Natural killer cell (primary cell): ENCODE measurements at regions of chr7 and their contacts with region 1.

Region 1: DNA sequence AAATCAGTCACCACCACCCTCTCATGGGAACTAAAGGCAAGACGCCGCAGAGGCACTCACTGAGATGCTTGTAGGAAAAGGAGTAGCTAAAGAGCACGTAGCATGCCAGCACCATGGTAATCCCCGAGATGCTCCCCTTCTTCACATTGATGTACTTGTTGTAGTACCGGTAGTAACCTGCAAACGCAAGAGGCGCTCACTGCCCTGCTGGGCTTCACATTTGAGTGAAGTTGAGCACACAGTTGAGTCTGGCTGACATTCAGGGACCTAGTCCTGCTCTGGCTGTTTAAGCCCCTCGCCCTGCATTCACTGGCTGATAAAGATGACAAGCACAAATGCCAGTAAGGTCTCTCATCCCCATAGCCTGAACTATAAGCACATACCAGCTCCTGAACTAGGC is 6.9 kb downstream of the ATP5MF start:
- DNase-seq: peak in 1 of 2 donors; percentile 49
- ATAC-seq: peak in 2 of 3 donors; percentile 47 to 70
- H3K4me3 ChIP-seq: no peak overlapping the region
- H3K4me3 Mint-ChIP-seq: no peak overlapping the region
- H3K27ac ChIP-seq: no peak overlapping the region
- H3K27ac Mint-ChIP-seq: peak overlapping the region in 1 of 2 donors; percentile 29
- H3K4me1 ChIP-seq: no peaks in the 10 kb centered on the region
- H3K4me1 Mint-ChIP-seq: peaks cover 22 to 27% of the 10 kb centered on the region in 2 donors
- H3K27me3 ChIP-seq: no peaks in the 10 kb centered on the region
- H3K27me3 Mint-ChIP-seq: no peaks in the 10 kb centered on the region
- CTCF ChIP-seq: no peak

Region 2: DNA sequence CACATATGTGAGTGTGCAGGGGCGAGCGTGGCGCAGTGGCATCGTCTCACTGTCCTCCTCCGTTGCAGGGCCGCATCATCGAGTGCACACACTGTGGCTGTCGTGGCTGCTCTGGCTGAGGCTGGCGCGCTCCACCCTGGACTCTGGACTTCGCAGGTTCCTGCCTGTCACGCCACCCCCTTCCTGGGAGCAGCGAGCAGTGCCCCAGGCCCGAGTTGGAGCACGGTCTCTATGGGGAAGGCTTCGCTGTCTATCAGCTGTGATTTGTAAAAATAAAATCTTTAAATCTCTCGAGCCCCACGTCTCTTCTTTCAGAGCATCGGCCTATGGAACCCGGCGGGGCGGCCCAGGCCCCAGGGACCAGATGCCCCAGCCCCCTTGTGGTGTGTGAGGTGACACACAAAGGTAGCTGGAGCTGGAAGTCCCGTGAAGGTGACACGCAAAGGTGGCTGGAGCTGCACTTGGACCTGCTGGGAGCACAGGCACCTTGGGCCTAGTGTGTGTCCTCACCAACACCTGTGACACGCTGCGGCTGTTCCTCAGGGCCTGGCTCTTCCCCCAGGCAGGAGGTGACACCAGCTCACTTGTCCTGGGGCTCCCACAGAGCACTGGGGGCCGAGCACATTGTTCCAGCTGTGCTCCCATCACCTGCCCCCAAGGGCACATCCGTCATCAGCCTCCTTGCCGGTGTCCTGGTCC is 39.6 kb before region 1 on chr7:
- intact Hi-C with region 1: loop called (anchors 5 kb)
- DNase-seq: no peak
- ATAC-seq: peak in 1 of 3 donors; percentile 26
- H3K4me3 ChIP-seq: no peak overlapping the region
- H3K4me3 Mint-ChIP-seq: no peak overlapping the region
- H3K27ac ChIP-seq: no peak overlapping the region
- H3K27ac Mint-ChIP-seq: peak overlapping the region in 1 of 2 donors; percentile 9
- H3K4me1 ChIP-seq: no peaks in the 10 kb centered on the region
- H3K4me1 Mint-ChIP-seq: peaks cover 0 to 7% of the 10 kb centered on the region in 2 donors
- H3K27me3 ChIP-seq: no peaks in the 10 kb centered on the region
- H3K27me3 Mint-ChIP-seq: no peaks in the 10 kb centered on the region
- CTCF ChIP-seq: no peak

Region 3: GRCh38 chr7:101453617-101454016 is 1994.5 kb after region 1 on chr7:
- intact Hi-C with region 1: no loop called
- DNase-seq: no peak
- ATAC-seq: no peak
- H3K4me3 ChIP-seq: no peak overlapping the region
- H3K4me3 Mint-ChIP-seq: no peak overlapping the region
- H3K27ac ChIP-seq: no peak overlapping the region
- H3K27ac Mint-ChIP-seq: no peak overlapping the region
- H3K4me1 ChIP-seq: no peaks in the 10 kb centered on the region
- H3K4me1 Mint-ChIP-seq: no peaks in the 10 kb centered on the region
- H3K27me3 ChIP-seq: no peaks in the 10 kb centered on the region
- H3K27me3 Mint-ChIP-seq: no peaks in the 10 kb centered on the region
- CTCF ChIP-seq: no peak